Left cardiac atrium (tissue), 4 donors: ENCODE measurements at regions of chr9 and their contacts with region 1.

Region 1: GRCh38 chr9:89602978-89603766 is 1.6 kb upstream of the GADD45G start:
- DNase-seq: peak; percentile 90
- ATAC-seq: peak; percentile 17 to 18

Region 2: DNA sequence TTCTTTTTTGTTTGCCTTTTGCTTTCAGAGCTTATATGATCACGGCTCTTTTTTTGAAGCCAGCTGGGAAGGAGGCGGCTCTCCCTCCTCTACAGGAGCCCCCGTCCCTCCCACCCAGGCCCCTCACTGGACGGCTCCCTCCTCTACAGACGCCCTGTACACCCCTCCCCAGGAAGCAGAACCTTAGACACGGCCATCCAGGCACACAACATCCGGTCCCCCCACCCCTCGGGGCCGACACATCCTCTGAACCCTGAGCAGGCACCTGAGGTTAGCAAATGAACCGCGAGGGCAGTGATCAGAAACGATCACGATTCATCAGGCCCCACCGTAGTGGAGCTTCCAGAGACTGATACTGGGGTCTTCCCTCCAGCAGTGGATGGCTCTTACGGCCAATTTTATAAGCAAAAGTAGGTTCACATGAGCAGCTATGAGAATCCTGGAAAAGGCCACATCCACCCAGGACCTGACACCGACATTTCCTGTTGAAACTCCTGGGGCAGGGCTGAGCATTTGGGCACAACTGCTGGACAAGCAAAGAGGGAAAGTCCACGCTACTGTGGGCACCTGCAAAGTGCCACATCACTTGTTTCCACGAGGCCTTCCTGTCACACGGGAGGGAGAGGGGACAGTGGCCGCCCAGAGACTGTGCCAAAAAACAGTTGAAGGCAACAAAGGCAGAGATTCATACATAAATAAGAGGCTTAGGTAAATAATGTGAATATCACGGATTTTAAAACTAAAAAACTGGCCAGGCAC is 184.1 kb before region 1 on chr9:
- intact Hi-C with region 1: no loop called
- DNase-seq: no peak
- ATAC-seq: no peak

Region 3: GRCh38 chr9:89661956-89662717 is 59.0 kb after region 1 on chr9:
- intact Hi-C with region 1: loop called in 1 of 2 experiments (anchors 2 kb)
- DNase-seq: peak; percentile 98
- ATAC-seq: peak; percentile 97 to 98

Region 4: DNA sequence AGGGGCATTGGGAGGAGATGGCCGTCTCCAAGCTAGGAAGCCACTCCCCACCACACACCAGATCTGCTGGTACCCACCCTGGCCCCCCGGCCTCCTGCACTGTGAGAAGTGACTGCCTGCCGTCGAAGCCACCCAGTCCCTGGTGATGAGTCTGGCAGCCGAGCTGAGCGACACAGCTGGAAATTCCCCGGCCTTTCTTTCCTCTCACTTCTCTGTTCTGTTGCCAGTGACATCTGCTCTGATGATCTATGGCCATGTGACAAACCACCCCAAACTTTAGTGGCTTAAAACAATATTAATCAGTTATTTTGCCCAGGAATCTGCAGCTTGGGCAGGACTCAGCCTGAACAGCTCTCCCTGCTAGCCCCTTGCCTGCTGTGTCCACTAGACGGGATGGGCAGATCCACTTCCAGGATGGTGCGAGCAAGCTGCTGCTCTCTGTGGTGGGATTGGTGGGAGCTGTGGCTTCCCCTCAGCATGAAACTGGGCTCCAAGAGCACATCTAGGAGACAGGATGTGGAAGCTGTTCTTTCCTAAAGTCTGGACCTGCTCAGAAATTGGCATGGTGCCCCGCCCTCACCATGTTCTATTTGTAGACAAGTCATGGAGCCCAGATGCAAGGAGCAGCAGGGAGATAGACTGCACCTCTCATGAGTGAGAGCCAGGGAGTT is 212.9 kb after region 1 on chr9:
- intact Hi-C with region 1: loop called in 1 of 2 experiments (anchors 10 kb)
- DNase-seq: peak; percentile 64
- ATAC-seq: peak; percentile 44 to 54

Region 5: GRCh38 chr9:89923961-89924504 is 320.9 kb after region 1 on chr9:
- intact Hi-C with region 1: loop called (anchors 5 to 10 kb)
- DNase-seq: no peak
- ATAC-seq: no peak

Region 6: DNA sequence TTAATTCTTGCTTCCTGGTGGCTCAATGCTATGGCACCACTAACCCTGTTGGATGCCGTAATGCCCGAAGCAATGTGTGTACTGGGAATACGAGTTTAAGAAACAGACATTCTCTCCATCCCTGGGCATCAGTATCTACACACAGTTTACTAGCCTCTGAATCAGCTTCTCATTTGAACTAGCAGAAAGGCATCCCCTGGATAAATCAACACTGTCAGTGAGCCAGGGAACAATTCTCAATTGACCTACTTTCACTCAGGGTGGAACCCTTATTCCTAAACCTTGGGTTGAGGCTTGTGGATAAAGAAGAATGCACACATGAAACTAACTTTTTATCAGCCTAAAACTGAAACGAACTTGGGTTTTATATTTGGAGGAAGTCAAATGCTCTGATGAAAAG is 332.6 kb after region 1 on chr9:
- intact Hi-C with region 1: loop called in 1 of 2 experiments (anchors 5 kb)
- DNase-seq: no peak
- ATAC-seq: peak in 1 of 2 donors; percentile 51

Region 7: GRCh38 chr9:90102292-90102901 is 499.2 kb after region 1 on chr9:
- intact Hi-C with region 1: loop called (anchors 1 to 5 kb)
- DNase-seq: peak; percentile 85
- ATAC-seq: peak; percentile 93